CD14-positive monocyte (primary cell): ENCODE measurements at regions of chr7 and their contacts with region 1.

Region 1: DNA sequence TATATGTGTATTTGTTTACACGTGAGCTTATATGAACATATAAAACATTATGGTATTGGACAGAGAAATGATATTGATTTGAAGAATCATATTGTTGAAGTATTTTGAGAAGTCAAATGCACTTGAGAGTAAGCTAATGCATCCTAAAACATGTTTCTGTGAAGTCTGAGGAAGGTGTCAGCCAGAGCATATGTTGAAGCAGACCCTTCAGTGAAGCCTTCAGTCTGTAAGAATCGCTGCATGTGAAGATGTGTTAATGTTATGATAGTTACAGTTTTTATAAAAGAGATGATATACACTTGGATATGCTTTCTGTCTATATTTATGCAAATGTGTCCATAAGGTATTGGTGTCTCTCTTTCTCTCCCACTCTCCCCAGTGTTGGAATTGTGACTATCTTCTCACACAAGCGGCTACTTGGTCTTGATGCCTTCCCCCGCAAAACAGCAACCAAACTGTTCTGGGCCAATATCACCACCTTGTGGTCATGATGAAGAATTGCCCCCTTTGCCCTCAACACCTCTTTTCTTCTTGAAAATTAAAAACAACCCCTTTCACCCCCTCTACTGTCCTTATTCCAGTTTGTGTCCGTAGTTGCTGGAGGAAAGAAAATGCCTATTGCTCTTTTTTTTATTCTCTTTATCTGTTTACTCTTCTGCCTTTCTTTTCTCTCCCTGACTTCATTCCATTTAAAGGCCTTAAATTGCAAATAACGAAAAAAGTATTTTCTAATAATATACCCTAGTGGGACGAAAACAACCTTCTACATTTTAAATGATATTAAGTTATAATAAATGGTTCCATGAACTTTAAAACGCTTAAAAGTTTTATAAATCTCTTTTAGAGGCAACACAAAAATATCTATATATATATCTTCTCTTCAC is 64.9 kb downstream of the IKZF1 start:
- DNase-seq: peak; percentile 36 to 71 (median 56)
- H3K4me3 ChIP-seq: no peak overlapping the region
- H3K4me3 Mint-ChIP-seq: no peak overlapping the region
- H3K27ac ChIP-seq: peak overlapping the region in 1 of 2 donors; percentile 59
- H3K27ac Mint-ChIP-seq: peak overlapping the region in 3 of 7 donors; percentile 9 to 63 (median 50)
- H3K4me1 ChIP-seq: no peaks in the 10 kb centered on the region
- H3K4me1 Mint-ChIP-seq: peaks cover 6% of the 10 kb centered on the region
- H3K27me3 ChIP-seq: no peaks in the 10 kb centered on the region
- H3K27me3 Mint-ChIP-seq: no peaks in the 10 kb centered on the region
- CTCF ChIP-seq: peak; percentile 91

Region 2: DNA sequence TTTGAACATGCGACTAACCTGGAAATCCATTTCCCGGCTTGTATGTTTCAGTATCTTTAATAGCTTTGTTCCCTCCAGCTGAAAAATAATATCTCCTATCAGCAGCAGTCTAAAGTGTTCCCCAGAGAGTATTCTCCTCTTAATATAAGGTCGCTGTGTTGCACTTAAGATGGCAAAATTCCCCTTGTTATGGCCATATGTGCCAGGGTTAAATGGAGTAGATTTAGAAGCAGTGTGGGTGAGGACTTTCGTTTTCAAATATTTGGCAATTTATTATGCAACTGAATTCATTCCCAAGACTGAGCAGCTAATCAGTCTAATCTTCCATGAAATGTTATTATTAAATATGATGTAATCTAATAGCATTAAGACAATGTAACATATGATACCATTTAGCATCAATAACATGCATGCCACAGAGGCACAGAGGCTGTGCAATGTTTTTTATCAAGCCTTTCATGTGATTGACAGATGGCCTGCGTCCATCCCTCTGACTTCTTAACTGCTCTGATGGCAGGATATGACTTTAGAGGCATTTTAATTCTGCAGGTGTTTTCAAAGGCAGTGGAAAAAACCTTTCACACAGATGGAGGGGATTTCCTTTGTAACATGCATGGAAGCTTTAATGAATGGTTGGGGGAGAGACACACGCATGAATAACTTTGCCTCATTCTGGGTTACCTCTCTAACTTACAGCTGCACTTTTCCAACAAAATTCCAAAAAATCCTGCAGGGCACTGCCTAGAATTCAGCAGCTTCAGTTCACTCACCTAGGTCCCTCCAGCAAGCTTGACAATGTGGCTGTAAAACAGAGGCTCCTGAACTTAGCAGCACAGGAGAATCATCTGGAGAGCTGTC is 221.2 kb before region 1 on chr7:
- intact Hi-C with region 1: loop called in 1 of 2 experiments (anchors 5 kb)
- DNase-seq: no peak
- H3K4me3 ChIP-seq: no peak overlapping the region
- H3K4me3 Mint-ChIP-seq: no peak overlapping the region
- H3K27ac ChIP-seq: no peak overlapping the region
- H3K27ac Mint-ChIP-seq: no peak overlapping the region
- H3K4me1 ChIP-seq: no peaks in the 10 kb centered on the region
- H3K4me1 Mint-ChIP-seq: peaks cover 7% of the 10 kb centered on the region
- H3K27me3 ChIP-seq: no peaks in the 10 kb centered on the region
- H3K27me3 Mint-ChIP-seq: peaks cover 0 to 4% (median 2%) of the 10 kb centered on the region in 3 donors
- CTCF ChIP-seq: no peak

Region 3: GRCh38 chr7:50206453-50207250 is 162.7 kb before region 1 on chr7:
- intact Hi-C with region 1: loop called (anchors 2 to 5 kb)
- DNase-seq: peak; percentile 74 to 82 (median 76)
- H3K4me3 ChIP-seq: peak overlapping the region in 1 of 3 experiments; percentile 54
- H3K4me3 Mint-ChIP-seq: peak overlapping the region; percentile 63 to 67
- H3K27ac ChIP-seq: peak overlapping the region; percentile 43 to 73
- H3K27ac Mint-ChIP-seq: peak overlapping the region; percentile 84 to 94 (median 92)
- H3K4me1 ChIP-seq: peaks cover 40 to 41% of the 10 kb centered on the region in 2 donors
- H3K4me1 Mint-ChIP-seq: peaks cover 53% of the 10 kb centered on the region
- H3K27me3 ChIP-seq: no peaks in the 10 kb centered on the region
- H3K27me3 Mint-ChIP-seq: peaks cover 0 to 11% (median 0%) of the 10 kb centered on the region in 3 donors
- CTCF ChIP-seq: no peak

Region 4: DNA sequence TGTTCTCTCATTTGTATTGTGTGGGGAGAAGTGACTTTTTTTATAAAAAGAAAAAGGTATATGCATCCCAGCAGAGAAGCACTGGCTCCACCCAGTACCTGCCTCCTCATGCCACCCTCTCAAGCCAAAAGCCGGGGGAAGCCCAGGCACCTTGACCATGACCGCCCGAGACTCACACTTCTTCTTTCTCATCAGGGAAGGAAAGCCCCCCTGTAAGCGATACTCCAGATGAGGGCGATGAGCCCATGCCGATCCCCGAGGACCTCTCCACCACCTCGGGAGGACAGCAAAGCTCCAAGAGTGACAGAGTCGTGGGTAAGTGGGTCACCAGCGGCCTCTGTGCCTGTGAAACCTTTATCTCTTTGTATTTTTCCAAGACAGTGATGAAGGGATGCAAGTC is 41.9 kb before region 1 on chr7:
- intact Hi-C with region 1: no loop called
- DNase-seq: no peak
- H3K4me3 ChIP-seq: no peak overlapping the region
- H3K4me3 Mint-ChIP-seq: no peak overlapping the region
- H3K27ac ChIP-seq: no peak overlapping the region
- H3K27ac Mint-ChIP-seq: peak overlapping the region in 2 of 7 donors; percentile 48 to 66
- H3K4me1 ChIP-seq: peaks cover 28 to 36% of the 10 kb centered on the region in 2 donors
- H3K4me1 Mint-ChIP-seq: peaks cover 9% of the 10 kb centered on the region
- H3K27me3 ChIP-seq: no peaks in the 10 kb centered on the region
- H3K27me3 Mint-ChIP-seq: no peaks in the 10 kb centered on the region
- CTCF ChIP-seq: no peak

Region 5: GRCh38 chr7:50418086-50418515 is 48.7 kb after region 1 on chr7:
- intact Hi-C with region 1: no loop called
- DNase-seq: peak; percentile 60 to 79 (median 78)
- H3K4me3 ChIP-seq: no peak overlapping the region
- H3K4me3 Mint-ChIP-seq: no peak overlapping the region
- H3K27ac ChIP-seq: no peak overlapping the region
- H3K27ac Mint-ChIP-seq: peak overlapping the region in 1 of 7 donors; percentile 74
- H3K4me1 ChIP-seq: peaks cover 53 to 55% of the 10 kb centered on the region in 2 donors
- H3K4me1 Mint-ChIP-seq: peaks cover 54% of the 10 kb centered on the region
- H3K27me3 ChIP-seq: no peaks in the 10 kb centered on the region
- H3K27me3 Mint-ChIP-seq: peaks cover 0 to 3% (median 2%) of the 10 kb centered on the region in 3 donors
- CTCF ChIP-seq: peak; percentile 94

Region 6: DNA sequence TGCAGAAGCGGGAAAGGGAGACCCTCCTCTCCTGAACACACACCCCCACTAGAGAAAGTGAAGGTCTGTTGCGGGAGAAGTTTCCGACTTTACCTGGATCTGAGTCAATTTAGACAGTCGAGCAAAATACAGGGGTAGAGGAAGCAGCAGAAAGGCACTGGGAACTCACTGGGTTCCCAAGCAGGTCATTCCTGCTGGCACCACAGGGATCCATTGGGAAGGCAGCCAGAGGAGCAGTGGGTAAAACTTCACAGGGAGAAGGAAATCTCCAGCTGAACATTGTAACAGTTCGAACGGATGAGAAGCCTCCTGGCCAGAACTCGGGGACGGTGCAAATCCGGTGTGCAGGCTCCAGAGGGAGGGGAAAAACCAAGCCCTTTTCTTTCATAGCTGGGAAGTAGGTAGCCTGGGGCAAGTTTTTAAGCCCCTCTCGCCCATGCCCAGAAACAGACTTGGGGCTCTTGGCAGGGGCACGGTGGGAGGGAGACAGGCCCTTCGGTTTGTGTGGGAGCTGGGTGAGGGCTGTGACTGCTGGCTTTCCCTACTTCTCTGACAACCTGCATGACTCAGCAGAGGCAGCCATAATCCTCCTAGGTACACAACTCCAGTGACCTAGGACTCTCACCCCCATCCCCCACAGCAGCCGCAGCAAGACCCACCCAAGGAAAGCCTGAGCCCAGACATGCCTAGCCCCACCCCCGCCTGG is 143.9 kb after region 1 on chr7:
- intact Hi-C with region 1: no loop called
- DNase-seq: no peak
- H3K4me3 ChIP-seq: no peak overlapping the region
- H3K4me3 Mint-ChIP-seq: no peak overlapping the region
- H3K27ac ChIP-seq: no peak overlapping the region
- H3K27ac Mint-ChIP-seq: no peak overlapping the region
- H3K4me1 ChIP-seq: no peaks in the 10 kb centered on the region
- H3K4me1 Mint-ChIP-seq: no peaks in the 10 kb centered on the region
- H3K27me3 ChIP-seq: no peaks in the 10 kb centered on the region
- H3K27me3 Mint-ChIP-seq: peaks cover 0 to 6% (median 3%) of the 10 kb centered on the region in 3 donors
- CTCF ChIP-seq: no peak

Region 7: GRCh38 chr7:51606601-51607154 is 1237.3 kb after region 1 on chr7:
- intact Hi-C with region 1: no loop called
- DNase-seq: no peak
- H3K4me3 ChIP-seq: no peak overlapping the region
- H3K4me3 Mint-ChIP-seq: no peak overlapping the region
- H3K27ac ChIP-seq: no peak overlapping the region
- H3K27ac Mint-ChIP-seq: no peak overlapping the region
- H3K4me1 ChIP-seq: no peaks in the 10 kb centered on the region
- H3K4me1 Mint-ChIP-seq: no peaks in the 10 kb centered on the region
- H3K27me3 ChIP-seq: no peaks in the 10 kb centered on the region
- H3K27me3 Mint-ChIP-seq: peaks cover 0 to 2% (median 0%) of the 10 kb centered on the region in 3 donors
- CTCF ChIP-seq: no peak